ENCODE measurements at regions of chr10 and their contacts with region 1.

Region 1: DNA sequence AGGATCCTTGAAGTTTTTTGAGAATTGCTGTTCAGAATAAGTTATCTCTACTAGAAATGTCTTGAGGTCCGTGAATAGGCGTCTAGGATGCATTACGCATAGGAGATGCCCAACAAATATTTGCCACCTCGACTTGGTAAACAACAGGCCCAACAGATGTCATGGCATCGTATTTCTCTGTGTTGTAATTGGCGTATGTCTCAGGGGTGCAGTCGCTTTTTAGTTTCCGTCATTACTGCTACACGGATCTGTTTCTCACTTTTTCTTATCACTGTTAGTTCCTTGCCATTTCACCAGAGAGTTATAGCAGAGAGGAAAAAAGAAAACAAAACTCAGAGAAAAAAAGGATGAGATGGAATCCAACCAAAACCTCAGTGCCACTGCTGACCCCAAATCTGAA is 73.0 kb upstream of the SFMBT2 start:
- DNase-seq: no peak
- H3K4me3 ChIP-seq: no peak overlapping the region
- H3K27ac ChIP-seq: peak overlapping the region; percentile 6 to 67 (median 45)
- H3K4me1 ChIP-seq: peaks cover 0 to 5% (median 0%) of the 10 kb centered on the region in 4 donors
- H3K27me3 ChIP-seq: no peaks in the 10 kb centered on the region
- CTCF ChIP-seq: no peak
- EP300 ChIP-seq: no peak
- POLR2A ChIP-seq: no peak

Region 2: GRCh38 chr10:7337431-7338171 is 146.2 kb before region 1 on chr10:
- in situ Hi-C with region 1: no loop called
- intact Hi-C with region 1: no loop called
- DNase-seq: no peak
- H3K4me3 ChIP-seq: no peak overlapping the region
- H3K27ac ChIP-seq: no peak overlapping the region
- H3K4me1 ChIP-seq: no peaks in the 10 kb centered on the region
- H3K27me3 ChIP-seq: no peaks in the 10 kb centered on the region
- CTCF ChIP-seq: no peak
- EP300 ChIP-seq: no peak
- POLR2A ChIP-seq: no peak

Region 3: DNA sequence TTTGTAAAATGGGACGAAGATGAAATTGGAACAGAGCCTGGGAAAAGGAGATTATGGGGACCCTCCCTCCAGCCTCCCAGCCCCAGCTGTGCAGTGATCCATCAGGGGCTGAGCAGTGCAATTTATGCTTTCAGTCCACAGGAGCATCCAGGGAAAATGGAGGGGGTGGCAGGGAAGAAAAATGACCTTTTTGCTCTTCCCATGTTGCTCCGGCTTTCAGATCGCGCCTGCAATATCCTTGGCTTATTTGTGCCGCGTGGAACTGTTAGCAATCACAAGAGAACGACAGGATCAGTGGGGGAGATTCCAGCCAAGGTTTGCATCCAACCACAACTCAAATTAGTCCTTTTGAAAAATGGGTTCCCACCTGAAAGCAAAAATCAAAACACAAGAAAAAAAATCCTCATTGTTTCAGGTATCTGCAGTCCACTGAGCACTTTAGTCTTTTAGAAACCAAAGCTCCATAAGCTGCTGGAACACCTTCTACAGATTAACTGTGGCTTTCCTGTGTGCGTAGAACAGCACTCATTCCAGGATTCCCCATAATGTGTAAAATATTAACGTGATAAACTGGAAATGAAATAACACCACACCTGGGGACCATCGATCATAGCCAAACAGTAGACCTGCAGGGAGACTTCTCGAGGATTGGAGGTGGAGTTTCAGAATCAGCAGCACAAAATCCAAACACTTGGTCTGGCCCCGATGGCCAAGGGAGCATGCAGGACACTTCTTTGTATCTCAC is 42.3 kb before region 1 on chr10:
- in situ Hi-C with region 1: no loop called
- intact Hi-C with region 1: loop called (anchors 1 kb)
- DNase-seq: no peak
- H3K4me3 ChIP-seq: no peak overlapping the region
- H3K27ac ChIP-seq: no peak overlapping the region
- H3K4me1 ChIP-seq: peaks cover 0 to 9% (median 0%) of the 10 kb centered on the region in 4 donors
- H3K27me3 ChIP-seq: peaks cover 12% of the 10 kb centered on the region
- CTCF ChIP-seq: no peak
- EP300 ChIP-seq: no peak
- POLR2A ChIP-seq: no peak

Measured in transverse colon (tissue), 4 donors.